ENCODE measurements at regions of chr10 and their contacts with region 1.

Region 1: DNA sequence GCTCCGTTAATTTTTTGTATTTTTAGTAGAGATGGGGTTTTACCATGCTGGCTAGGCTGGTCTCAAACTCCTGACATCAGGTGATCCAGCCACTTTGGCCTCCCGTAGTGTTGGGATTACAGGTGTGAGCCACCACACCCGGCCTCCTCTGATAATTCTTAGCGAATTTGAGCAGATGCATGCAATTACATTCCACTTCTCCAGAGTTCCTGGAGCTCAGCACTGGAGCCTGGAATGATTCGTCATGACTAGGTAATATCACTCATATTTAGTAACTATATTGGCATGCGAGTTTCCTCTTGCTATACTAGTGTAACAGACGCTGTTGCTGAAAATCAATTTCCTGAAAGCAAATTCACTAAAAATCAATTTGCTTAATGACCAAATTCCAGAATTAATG is 86.8 kb downstream of the MKX start:
- DNase-seq: no peak
- H3K4me3 ChIP-seq: no peak overlapping the region
- H3K27ac ChIP-seq: no peak overlapping the region
- H3K4me1 ChIP-seq: no peaks in the 10 kb centered on the region
- H3K27me3 ChIP-seq: peaks cover 0 to 6% (median 0%) of the 10 kb centered on the region in 4 donors
- CTCF ChIP-seq: no peak
- POLR2A ChIP-seq: no peak

Region 2: DNA sequence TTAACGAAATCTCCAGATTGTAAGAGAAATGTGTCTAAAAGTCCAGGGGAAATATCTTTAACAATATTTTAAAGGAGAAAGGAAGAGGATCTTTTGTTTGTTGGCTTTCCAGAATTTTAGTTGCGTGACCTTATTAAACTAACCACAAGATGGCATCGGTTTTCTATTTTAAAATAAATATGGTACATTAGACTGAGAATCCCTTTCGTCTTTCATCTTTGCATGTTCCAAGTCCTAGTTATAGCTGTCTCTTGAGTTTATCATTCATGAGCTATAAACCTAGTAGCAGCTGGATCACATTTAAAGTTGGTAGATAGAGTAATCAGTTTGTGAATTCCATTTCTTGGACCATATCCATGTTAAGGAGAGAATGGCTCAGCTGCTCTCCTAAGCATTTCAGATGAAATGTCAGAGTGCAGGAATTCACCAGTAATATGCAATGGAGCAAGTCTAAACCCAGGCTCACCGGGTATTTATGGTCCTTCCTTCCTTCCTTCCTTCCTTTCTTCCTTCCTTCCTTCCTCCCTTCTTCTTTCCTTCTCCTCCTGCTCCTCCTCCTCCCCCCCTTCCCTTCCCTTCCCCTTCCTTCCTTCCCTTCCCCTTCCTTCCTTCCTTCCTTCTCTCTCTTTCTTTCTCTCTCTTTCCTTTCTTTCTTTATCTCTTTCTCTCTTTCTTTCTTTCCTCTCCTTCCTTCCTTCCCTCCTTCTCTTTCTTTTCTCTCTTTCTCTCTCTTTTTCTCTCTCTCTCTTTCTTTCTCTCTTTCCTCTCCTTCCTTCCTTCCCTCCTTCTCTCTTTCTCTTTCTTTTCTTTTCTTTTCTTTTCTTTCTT is 212.5 kb before region 1 on chr10:
- intact Hi-C with region 1: loop called (anchors 10 kb)
- DNase-seq: no peak
- H3K4me3 ChIP-seq: no peak overlapping the region
- H3K27ac ChIP-seq: no peak overlapping the region
- H3K4me1 ChIP-seq: peaks cover 0 to 5% (median 0%) of the 10 kb centered on the region in 3 donors
- H3K27me3 ChIP-seq: no peaks in the 10 kb centered on the region
- CTCF ChIP-seq: peak in 5 of 6 experiments; percentile 16 to 67 (median 52)
- POLR2A ChIP-seq: no peak

Region 3: GRCh38 chr10:27558612-27559020 is 100.2 kb before region 1 on chr10:
- intact Hi-C with region 1: loop called (anchors 2 kb)
- DNase-seq: no peak
- H3K4me3 ChIP-seq: no peak overlapping the region
- H3K27ac ChIP-seq: no peak overlapping the region
- H3K4me1 ChIP-seq: peaks cover 0 to 7% (median 0%) of the 10 kb centered on the region in 3 donors
- H3K27me3 ChIP-seq: no peaks in the 10 kb centered on the region
- CTCF ChIP-seq: peak; percentile 16 to 76 (median 60)
- POLR2A ChIP-seq: no peak

Region 4: DNA sequence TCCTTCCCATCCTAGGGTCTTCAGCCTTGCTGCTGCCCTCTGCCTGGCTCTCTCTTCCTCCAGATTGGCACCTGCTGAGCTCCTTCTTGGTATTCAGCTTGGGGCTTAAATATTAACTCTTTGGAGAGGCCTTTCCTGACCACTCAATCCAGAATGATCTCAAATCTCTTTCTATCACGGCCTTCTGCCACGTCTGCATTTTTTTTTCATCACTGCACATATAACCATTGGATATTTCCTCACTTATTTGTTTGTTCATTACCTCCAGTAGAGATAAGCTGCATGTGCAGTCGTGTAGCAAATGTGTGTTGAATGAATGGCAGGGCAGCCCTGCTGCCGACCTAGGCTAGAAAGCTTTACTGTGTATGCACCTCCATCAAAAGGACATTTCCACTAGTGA is 695.7 kb after region 1 on chr10:
- intact Hi-C with region 1: no loop called
- DNase-seq: no peak
- H3K4me3 ChIP-seq: no peak overlapping the region
- H3K27ac ChIP-seq: no peak overlapping the region
- H3K4me1 ChIP-seq: no peaks in the 10 kb centered on the region
- H3K27me3 ChIP-seq: no peaks in the 10 kb centered on the region
- CTCF ChIP-seq: no peak
- POLR2A ChIP-seq: no peak